A549 (cell line): ENCODE measurements at regions of chr1 and their contacts with region 1.

Region 1: DNA sequence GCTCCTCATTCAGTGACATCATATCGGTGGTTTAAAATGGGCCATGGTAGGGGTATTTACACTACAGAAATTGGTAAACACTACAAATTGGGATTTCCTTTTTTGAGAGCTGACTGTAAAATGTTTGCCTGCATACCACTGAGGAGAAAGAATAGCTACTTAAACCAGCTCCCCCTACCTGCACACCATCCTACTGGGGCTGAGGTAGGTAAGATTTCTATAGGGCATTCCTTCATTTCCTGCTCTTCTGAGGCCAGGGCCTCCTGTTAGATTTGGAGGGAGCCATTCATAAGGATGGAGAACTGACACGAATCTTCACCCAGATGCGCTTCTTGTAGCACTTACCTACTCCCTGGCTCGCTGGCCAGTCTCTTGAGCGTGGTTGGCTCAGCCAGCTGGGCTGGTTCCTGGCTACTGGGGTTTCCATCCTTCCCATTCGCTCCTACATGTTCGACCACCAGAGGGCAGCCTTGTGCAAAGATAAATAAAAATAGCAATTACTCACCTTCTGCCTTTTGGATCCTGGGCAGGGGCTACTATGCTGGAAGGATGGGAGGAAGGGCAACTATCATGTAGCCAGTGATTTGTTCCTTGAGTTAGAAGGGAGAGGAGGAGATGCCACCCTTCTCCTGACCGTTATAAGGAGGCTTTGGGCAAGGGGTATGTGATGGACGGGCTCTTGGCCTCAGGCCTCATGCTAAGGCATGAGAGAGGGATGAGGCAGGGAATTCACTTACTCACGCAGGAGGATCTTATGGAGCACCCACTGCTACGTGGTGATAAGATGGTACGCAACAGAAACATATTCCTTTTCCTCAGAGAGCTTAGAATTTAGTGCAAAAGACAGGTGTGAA is 10.7 kb downstream of the OPTC start:
- DNase-seq: peak; percentile 75 to 90
- ATAC-seq: peak; percentile 87 to 94
- H3K4me3 ChIP-seq: no peak overlapping the region
- H3K27ac ChIP-seq: peak overlapping the region in 1 of 2 experiments; percentile 24; a peak in 2 of 6 replicates
- H3K4me1 ChIP-seq: peaks cover 22% of the 10 kb centered on the region
- CTCF ChIP-seq: peak; percentile 89
- EP300 ChIP-seq: no peak
- POLR2A ChIP-seq: no peak
- RAD21 ChIP-seq: peak; percentile 87 to 98

Region 2: GRCh38 chr1:202825759-202826158 is 678.9 kb before region 1 on chr1:
- CTCF ChIA-PET with region 1: no interaction called
- POLR2A ChIA-PET with region 1: no interaction called
- DNase-seq: no peak
- ATAC-seq: 0 out of 6 replicates have a peak, but pooled peaks of 1 of the 2 experiments have one; percentile 39
- H3K4me3 ChIP-seq: no peak overlapping the region
- H3K27ac ChIP-seq: no peak overlapping the region
- H3K4me1 ChIP-seq: peaks cover 4% of the 10 kb centered on the region; the same call in 2 of the 3 replicates
- CTCF ChIP-seq: no peak
- EP300 ChIP-seq: no peak
- POLR2A ChIP-seq: no peak
- RAD21 ChIP-seq: no peak

Region 3: DNA sequence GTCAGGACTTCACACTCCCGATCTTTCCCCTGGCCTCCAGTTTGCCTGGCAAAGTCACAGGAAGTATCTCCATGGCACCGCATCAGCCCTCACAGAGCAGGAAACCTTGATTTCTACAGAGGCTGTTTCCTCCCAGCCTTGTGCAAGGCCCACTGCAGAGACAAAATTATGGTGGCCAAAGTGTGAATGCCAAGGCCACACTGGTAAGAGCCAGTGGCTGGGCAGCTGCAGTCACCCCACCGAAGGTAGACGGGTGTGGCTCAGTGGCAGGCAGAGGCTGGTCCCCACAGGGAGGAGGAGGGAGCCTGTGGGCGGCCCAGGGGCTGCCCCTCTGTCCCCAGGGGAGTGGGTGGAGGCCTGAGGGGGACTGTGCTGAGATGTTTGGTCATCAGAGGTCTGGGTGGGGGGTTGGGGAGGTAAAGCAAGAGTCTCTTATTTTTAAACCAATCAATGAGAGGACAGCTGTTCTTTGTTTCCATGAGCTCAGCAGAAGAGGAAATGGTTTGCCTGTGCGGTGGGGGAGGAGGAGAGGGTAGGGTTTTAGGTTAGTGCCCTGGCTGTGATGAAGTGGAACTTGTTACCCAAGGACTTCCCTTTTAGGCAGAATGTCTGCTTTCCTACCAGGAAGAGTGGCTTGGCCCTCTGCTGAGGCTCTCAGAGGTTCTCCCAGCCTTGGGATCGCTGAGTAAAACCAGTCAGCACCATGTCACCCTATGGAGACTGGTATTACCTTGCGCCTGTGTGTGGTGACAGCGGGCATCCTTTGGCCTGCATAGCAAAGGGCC is 217.3 kb before region 1 on chr1:
- CTCF ChIA-PET with region 1: no interaction called
- POLR2A ChIA-PET with region 1: no interaction called
- DNase-seq: no peak
- ATAC-seq: no peak
- H3K4me3 ChIP-seq: no peak overlapping the region
- H3K27ac ChIP-seq: peak overlapping the region in 1 of 2 experiments; percentile 22; a peak in 1 of 6 replicates
- H3K4me1 ChIP-seq: peaks cover 14% of the 10 kb centered on the region
- CTCF ChIP-seq: no peak
- EP300 ChIP-seq: no peak
- POLR2A ChIP-seq: no peak
- RAD21 ChIP-seq: no peak

Region 4: DNA sequence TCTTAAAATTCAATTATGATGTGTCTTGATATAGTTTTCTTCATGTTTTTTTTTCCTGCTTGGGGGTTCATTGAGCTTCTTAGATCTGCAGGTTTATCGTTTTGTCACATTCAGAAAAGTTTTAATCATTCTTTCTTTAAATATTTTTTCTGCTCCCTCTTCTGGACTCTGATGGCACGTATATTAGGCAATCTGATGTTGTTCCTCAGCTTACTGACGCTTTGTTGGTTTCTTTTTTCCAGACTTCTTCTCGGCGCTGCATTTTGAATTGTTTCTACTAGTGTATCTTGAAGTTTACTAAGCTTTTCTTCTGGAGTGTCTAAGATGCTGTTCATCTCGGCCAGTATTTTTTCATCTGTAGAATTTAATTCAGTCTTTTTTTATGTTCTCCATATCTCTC is 108.9 kb before region 1 on chr1:
- CTCF ChIA-PET with region 1: no interaction called
- POLR2A ChIA-PET with region 1: no interaction called
- DNase-seq: no peak
- ATAC-seq: no peak
- H3K4me3 ChIP-seq: no peak overlapping the region
- H3K27ac ChIP-seq: no peak overlapping the region
- H3K4me1 ChIP-seq: no peaks in the 10 kb centered on the region
- CTCF ChIP-seq: no peak
- EP300 ChIP-seq: no peak
- POLR2A ChIP-seq: no peak
- RAD21 ChIP-seq: no peak

Region 5: GRCh38 chr1:203473281-203473680 is 31.3 kb before region 1 on chr1:
- CTCF ChIA-PET with region 1: no interaction called
- POLR2A ChIA-PET with region 1: no interaction called
- DNase-seq: no peak
- ATAC-seq: no peak
- H3K4me3 ChIP-seq: no peak overlapping the region
- H3K27ac ChIP-seq: no peak overlapping the region
- H3K4me1 ChIP-seq: no peaks in the 10 kb centered on the region
- CTCF ChIP-seq: no peak
- EP300 ChIP-seq: no peak
- POLR2A ChIP-seq: no peak
- RAD21 ChIP-seq: no peak

Region 6: GRCh38 chr1:203486618-203487370 is 17.8 kb before region 1 on chr1:
- CTCF ChIA-PET with region 1: interaction called, 39 read pairs
- POLR2A ChIA-PET with region 1: no interaction called
- DNase-seq: no peak
- ATAC-seq: no peak
- H3K4me3 ChIP-seq: no peak overlapping the region; the same call in 2 of the 3 replicates
- H3K27ac ChIP-seq: peak overlapping the region; percentile 76 to 88; a peak in 4 of 6 replicates
- H3K4me1 ChIP-seq: peaks cover 5% of the 10 kb centered on the region; the same call in 1 of the 3 replicates
- CTCF ChIP-seq: no peak
- EP300 ChIP-seq: no peak
- POLR2A ChIP-seq: no peak
- RAD21 ChIP-seq: no peak

Region 7: DNA sequence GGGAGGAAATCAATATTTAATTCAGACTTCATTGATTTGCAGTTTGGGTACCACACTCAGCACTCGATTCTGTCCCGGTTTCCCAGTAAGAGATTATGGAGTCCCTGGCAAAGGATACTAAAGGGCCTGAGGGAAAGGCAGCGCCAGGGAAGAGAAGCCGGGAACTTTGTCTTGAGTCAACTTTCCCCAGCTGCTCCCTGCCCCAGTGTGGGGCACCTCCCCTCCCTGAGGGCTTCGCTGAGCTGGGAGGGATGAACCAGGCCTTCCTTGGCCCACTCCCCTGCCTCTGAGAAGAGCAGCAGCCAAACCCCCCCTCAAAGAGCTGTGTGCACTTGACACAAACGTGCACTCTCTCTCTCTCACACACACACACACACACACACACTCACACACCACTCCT is 21.9 kb after region 1 on chr1:
- CTCF ChIA-PET with region 1: interaction called, 13 read pairs
- POLR2A ChIA-PET with region 1: no interaction called
- DNase-seq: no peak
- ATAC-seq: peak in 1 of 2 experiments; percentile 50; a peak in 3 of 6 replicates
- H3K4me3 ChIP-seq: no peak overlapping the region
- H3K27ac ChIP-seq: peak overlapping the region; percentile 43 to 75; a peak in 5 of 6 replicates
- H3K4me1 ChIP-seq: peaks cover 14% of the 10 kb centered on the region
- CTCF ChIP-seq: no peak
- EP300 ChIP-seq: no peak
- POLR2A ChIP-seq: no peak
- RAD21 ChIP-seq: no peak

Region 8: GRCh38 chr1:203558064-203558760 is 53.6 kb after region 1 on chr1:
- CTCF ChIA-PET with region 1: interaction called, 14 read pairs
- POLR2A ChIA-PET with region 1: no interaction called
- DNase-seq: peak; percentile 65 to 76
- ATAC-seq: peak; percentile 82 to 89
- H3K4me3 ChIP-seq: no peak overlapping the region
- H3K27ac ChIP-seq: peak overlapping the region; percentile 59 to 80
- H3K4me1 ChIP-seq: peaks cover 40% of the 10 kb centered on the region
- CTCF ChIP-seq: no peak
- EP300 ChIP-seq: peak; percentile 59 to 74; a peak in 2 of 5 replicates
- POLR2A ChIP-seq: no peak
- RAD21 ChIP-seq: peak; percentile 8 to 48; a peak in 1 of 5 replicates

Region 9: GRCh38 chr1:203638950-203639349 is 134.3 kb after region 1 on chr1:
- CTCF ChIA-PET with region 1: interaction called, 13 read pairs
- POLR2A ChIA-PET with region 1: no interaction called
- DNase-seq: no peak
- ATAC-seq: peak in 1 of 2 experiments; percentile 62; a peak in 3 of 6 replicates
- H3K4me3 ChIP-seq: no peak overlapping the region
- H3K27ac ChIP-seq: no peak overlapping the region
- H3K4me1 ChIP-seq: no peaks in the 10 kb centered on the region
- CTCF ChIP-seq: no peak
- EP300 ChIP-seq: no peak
- POLR2A ChIP-seq: no peak
- RAD21 ChIP-seq: 0 out of 5 replicates have a peak, but pooled peaks of 1 of the 2 experiments have one; percentile 5

Region 10: DNA sequence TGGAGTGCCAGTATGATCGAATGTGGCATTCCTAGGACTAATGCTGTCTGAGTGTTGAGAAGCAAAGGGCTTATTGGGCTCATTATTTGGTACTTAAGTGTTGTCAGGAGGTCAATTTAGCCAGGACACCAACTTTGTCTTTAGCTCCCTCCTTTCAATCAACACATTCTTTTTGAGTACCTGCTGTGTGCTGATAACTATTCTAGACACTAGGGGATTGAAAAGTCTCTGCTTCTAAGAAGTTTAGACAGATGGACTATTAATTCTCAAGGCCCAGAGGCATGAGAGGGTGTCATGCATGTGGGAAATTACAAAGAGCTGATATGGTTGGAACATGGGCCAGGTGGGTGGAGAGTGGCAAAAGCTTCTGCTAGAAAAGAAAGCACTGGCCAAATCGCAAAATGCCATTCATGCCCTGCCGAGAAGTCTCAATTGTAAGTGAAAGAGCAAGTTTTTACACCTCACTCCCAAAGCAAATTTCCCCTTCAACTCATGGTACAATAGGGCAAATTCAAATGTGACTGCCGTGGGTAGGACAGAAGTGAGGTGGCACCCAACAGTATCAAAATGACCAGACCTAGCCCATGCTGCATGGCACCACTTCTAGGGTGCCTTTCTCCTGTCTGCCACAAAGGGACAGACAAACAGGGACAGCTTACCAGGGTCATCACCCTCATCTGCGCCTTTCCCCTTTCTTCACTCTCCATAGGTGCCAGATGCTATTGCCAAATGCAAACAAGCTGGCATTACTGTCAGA is 206.8 kb after region 1 on chr1:
- CTCF ChIA-PET with region 1: interaction called, 343 read pairs
- POLR2A ChIA-PET with region 1: no interaction called
- DNase-seq: no peak
- ATAC-seq: no peak
- H3K4me3 ChIP-seq: no peak overlapping the region
- H3K27ac ChIP-seq: no peak overlapping the region
- H3K4me1 ChIP-seq: no peaks in the 10 kb centered on the region
- CTCF ChIP-seq: no peak
- EP300 ChIP-seq: no peak
- POLR2A ChIP-seq: no peak
- RAD21 ChIP-seq: no peak